CD4-positive, alpha-beta T cell (primary cell): ENCODE measurements at regions of chr20 and their contacts with region 1.

Region 1: GRCh38 chr20:50790651-50791277 is 4.1 kb upstream of the BCAS4 start:
- DNase-seq: peak; percentile 63 to 87 (median 78)
- ATAC-seq: peak; percentile 68
- H3K4me3 ChIP-seq: peak overlapping the region; percentile 25
- H3K4me3 Mint-ChIP-seq: no peak overlapping the region
- H3K27ac ChIP-seq: peak overlapping the region in 1 of 2 donors; percentile 71
- H3K27ac Mint-ChIP-seq: peak overlapping the region; percentile 44
- H3K4me1 ChIP-seq: peaks cover 27% of the 10 kb centered on the region
- H3K4me1 Mint-ChIP-seq: peaks cover 10% of the 10 kb centered on the region
- H3K27me3 ChIP-seq: no peaks in the 10 kb centered on the region
- H3K27me3 Mint-ChIP-seq: no peaks in the 10 kb centered on the region
- CTCF ChIP-seq: peak; percentile 81

Region 2: DNA sequence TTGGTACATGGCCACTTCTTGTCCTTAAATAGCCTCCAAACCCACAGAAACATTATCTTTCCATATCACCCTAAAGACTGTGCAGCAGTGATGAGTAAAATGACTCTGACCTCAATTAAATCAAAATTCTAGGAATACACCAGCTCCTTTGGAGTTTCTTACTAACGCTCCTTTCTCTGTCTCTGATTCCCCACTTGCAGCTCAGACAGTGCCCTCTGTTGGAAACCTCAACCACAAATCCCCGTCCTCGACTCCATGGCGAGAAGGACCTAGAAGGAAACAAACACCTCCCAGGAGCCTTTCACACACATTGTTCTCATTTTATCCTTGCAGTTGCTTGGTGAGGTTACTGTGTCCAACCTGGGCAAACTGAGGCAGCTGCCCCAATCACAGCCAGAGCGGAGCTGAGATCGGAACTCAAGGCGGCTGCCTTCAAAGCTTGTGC is 77.1 kb before region 1 on chr20:
- CTCF ChIA-PET with region 1: no interaction called
- POLR2A ChIA-PET with region 1: no interaction called
- intact Hi-C with region 1: no loop called
- DNase-seq: no peak
- ATAC-seq: no peak
- H3K4me3 ChIP-seq: no peak overlapping the region
- H3K4me3 Mint-ChIP-seq: no peak overlapping the region
- H3K27ac ChIP-seq: no peak overlapping the region
- H3K27ac Mint-ChIP-seq: no peak overlapping the region
- H3K4me1 ChIP-seq: no peaks in the 10 kb centered on the region
- H3K4me1 Mint-ChIP-seq: no peaks in the 10 kb centered on the region
- H3K27me3 ChIP-seq: peaks cover 0 to 7% of the 10 kb centered on the region in 2 experiments
- H3K27me3 Mint-ChIP-seq: peaks cover 29% of the 10 kb centered on the region
- CTCF ChIP-seq: no peak

Region 3: DNA sequence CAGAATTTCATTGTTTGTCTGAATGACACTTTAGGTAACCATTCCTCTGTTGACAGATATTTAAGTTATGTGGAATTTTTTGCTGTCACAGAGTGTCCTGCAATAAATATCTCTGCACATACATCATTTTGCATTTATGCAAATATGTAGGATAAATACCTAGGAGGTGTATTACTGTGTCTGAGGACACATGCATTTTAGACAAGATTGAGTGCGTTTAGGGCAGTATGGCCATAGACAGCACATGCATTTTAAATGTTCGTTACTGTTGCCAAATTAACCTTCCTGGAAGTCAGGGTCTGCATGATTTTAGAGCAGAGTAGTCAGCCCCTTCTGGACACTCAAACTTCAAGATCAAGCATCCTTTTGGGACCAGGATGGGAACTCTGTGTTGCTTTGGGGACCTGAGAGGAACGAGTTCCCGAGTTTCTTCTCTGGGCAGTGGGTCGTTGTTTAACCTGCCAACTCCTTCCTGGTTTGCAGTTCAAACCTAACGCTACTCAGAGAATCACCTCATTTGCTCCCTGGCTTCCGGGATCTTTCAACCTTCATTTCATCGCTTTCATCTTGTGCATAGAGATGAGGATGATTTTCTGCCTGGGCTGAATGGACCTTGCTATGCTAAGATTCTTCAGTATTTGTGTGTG is 13.8 kb after region 1 on chr20:
- CTCF ChIA-PET with region 1: interaction called, 10 read pairs
- POLR2A ChIA-PET with region 1: interaction called, 8 read pairs
- intact Hi-C with region 1: no loop called
- DNase-seq: peak in 10 of 14 experiments; percentile 9 to 70 (median 34)
- ATAC-seq: peak; percentile 96
- H3K4me3 ChIP-seq: no peak overlapping the region
- H3K4me3 Mint-ChIP-seq: peak overlapping the region; percentile 60
- H3K27ac ChIP-seq: peak overlapping the region; percentile 23 to 43
- H3K27ac Mint-ChIP-seq: peak overlapping the region; percentile 86
- H3K4me1 ChIP-seq: peaks cover 18% of the 10 kb centered on the region
- H3K4me1 Mint-ChIP-seq: peaks cover 37% of the 10 kb centered on the region
- H3K27me3 ChIP-seq: no peaks in the 10 kb centered on the region
- H3K27me3 Mint-ChIP-seq: no peaks in the 10 kb centered on the region
- CTCF ChIP-seq: no peak

Region 4: DNA sequence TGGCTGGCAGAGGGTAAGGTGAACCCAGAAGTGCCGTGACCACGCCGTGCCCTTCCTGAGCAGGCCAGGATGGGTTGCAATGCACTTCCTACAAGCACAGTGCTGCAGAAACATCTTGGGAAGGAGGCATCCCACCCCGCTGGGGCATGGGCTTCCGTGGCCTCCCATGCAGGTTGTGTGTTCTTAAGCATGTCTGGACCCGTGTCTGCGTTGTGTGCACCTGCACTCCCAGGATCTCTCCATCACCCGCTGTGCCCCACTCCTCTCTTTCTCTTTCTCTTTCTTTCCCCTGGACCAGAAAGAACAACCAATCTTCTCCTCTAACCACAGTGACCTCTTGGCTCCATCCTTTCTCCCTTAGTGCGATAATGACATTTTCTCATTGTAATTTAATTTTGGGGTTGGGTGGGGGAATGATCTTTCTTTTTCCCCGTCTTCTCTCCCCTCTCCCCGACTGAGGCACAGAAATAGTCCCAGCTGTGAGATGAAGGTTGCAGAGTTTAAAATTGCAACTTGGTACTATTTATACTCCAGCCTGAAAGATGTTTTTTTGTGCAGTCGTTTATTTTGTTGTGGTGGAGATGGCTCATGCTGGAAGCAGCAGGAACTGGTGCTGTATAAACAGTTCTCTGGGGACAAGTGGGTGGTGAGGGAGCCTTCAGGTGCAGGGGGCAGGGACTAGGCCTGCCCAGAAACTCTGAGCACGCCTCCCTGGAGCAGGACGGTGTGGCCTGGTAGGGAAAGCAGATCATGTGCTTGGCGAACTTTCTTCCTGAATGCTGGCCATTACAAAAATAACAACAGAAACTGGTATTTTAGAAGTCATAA is 24.6 kb after region 1 on chr20:
- CTCF ChIA-PET with region 1: interaction called, 24 read pairs
- POLR2A ChIA-PET with region 1: interaction called, 53 read pairs
- intact Hi-C with region 1: loop called (anchors 1 kb)
- DNase-seq: peak in 2 of 14 experiments; percentile 9 to 30
- ATAC-seq: peak; percentile 15
- H3K4me3 ChIP-seq: peak overlapping the region; percentile 7
- H3K4me3 Mint-ChIP-seq: peak overlapping the region; percentile 66
- H3K27ac ChIP-seq: no peak overlapping the region
- H3K27ac Mint-ChIP-seq: peak overlapping the region; percentile 87
- H3K4me1 ChIP-seq: peaks cover 34% of the 10 kb centered on the region
- H3K4me1 Mint-ChIP-seq: peaks cover 48% of the 10 kb centered on the region
- H3K27me3 ChIP-seq: no peaks in the 10 kb centered on the region
- H3K27me3 Mint-ChIP-seq: no peaks in the 10 kb centered on the region
- CTCF ChIP-seq: no peak

Region 5: GRCh38 chr20:50837532-50838506 is 47.1 kb after region 1 on chr20:
- CTCF ChIA-PET with region 1: no interaction called
- POLR2A ChIA-PET with region 1: no interaction called
- intact Hi-C with region 1: no loop called
- DNase-seq: no peak
- ATAC-seq: no peak
- H3K4me3 ChIP-seq: no peak overlapping the region
- H3K4me3 Mint-ChIP-seq: no peak overlapping the region
- H3K27ac ChIP-seq: no peak overlapping the region
- H3K27ac Mint-ChIP-seq: no peak overlapping the region
- H3K4me1 ChIP-seq: no peaks in the 10 kb centered on the region
- H3K4me1 Mint-ChIP-seq: no peaks in the 10 kb centered on the region
- H3K27me3 ChIP-seq: no peaks in the 10 kb centered on the region
- H3K27me3 Mint-ChIP-seq: no peaks in the 10 kb centered on the region
- CTCF ChIP-seq: no peak

Region 6: DNA sequence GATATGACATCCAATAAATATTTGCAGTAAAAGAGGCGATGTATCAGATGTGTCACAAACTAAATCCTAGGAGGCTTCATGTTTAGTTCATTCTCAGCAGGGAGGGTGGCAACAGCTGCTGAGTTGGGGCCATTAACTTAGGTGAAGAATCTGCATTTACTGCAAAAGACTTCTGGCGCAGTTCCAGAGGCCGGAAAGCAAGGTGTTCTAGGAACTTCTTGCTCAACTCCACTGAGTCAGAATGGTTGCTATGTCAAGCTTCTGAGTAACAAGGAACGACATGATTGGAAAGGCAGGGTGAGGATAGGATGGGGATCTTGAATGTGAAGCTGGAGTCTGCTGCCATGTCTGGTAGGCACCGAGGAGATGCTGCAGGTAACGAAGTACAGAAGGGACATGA is 128.8 kb after region 1 on chr20:
- CTCF ChIA-PET with region 1: interaction called, 13 read pairs
- POLR2A ChIA-PET with region 1: interaction called, 5 read pairs
- intact Hi-C with region 1: no loop called
- DNase-seq: no peak
- ATAC-seq: no peak
- H3K4me3 ChIP-seq: no peak overlapping the region
- H3K4me3 Mint-ChIP-seq: peak overlapping the region; percentile 39
- H3K27ac ChIP-seq: no peak overlapping the region
- H3K27ac Mint-ChIP-seq: peak overlapping the region; percentile 78
- H3K4me1 ChIP-seq: peaks cover 45% of the 10 kb centered on the region
- H3K4me1 Mint-ChIP-seq: peaks cover 91% of the 10 kb centered on the region
- H3K27me3 ChIP-seq: no peaks in the 10 kb centered on the region
- H3K27me3 Mint-ChIP-seq: no peaks in the 10 kb centered on the region
- CTCF ChIP-seq: no peak

Region 7: GRCh38 chr20:50958615-50959542 is 168.1 kb after region 1 on chr20 and contains the start of gene MOCS3:
- CTCF ChIA-PET with region 1: interaction called, 33 read pairs
- POLR2A ChIA-PET with region 1: interaction called, 47 read pairs
- intact Hi-C with region 1: loop called (anchors 2 kb)
- DNase-seq: peak; percentile 70 to 96 (median 76)
- ATAC-seq: peak; percentile 81
- H3K4me3 ChIP-seq: peak within 1 kb of the TSS; percentile 94
- H3K4me3 Mint-ChIP-seq: peak within 1 kb of the TSS; percentile 94
- H3K27ac ChIP-seq: peak within 1 kb of the TSS; percentile 82 to 99
- H3K27ac Mint-ChIP-seq: peak within 1 kb of the TSS; percentile 96
- H3K4me1 ChIP-seq: peaks cover 34% of the 10 kb centered on the region
- H3K4me1 Mint-ChIP-seq: peaks cover 62% of the 10 kb centered on the region
- H3K27me3 ChIP-seq: no peaks in the 10 kb centered on the region
- H3K27me3 Mint-ChIP-seq: no peaks in the 10 kb centered on the region
- CTCF ChIP-seq: no peak
- total RNA-seq, gene MOCS3: 2.7 to 3.0 TPM

Region 8: DNA sequence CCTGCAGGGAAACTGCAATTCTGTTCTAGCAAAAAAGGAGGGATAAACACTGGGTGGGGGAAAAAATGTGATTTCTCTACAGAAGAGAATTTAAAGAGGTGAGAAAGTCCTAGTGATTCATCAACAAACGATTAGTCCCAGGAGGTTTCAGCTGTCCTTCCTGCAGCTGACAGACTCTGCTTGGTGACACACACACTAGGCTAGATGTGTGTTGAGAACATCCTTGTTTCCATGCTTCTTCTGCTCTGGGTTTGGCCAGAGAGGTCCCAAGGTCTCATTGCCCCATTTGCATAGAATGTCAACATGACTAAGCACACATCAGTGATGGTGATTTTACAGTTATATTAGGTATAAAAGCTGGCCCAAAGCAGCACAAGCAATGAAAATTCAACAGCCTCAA is 493.4 kb after region 1 on chr20:
- CTCF ChIA-PET with region 1: no interaction called
- POLR2A ChIA-PET with region 1: no interaction called
- intact Hi-C with region 1: no loop called
- DNase-seq: no peak
- ATAC-seq: no peak
- H3K4me3 ChIP-seq: no peak overlapping the region
- H3K4me3 Mint-ChIP-seq: no peak overlapping the region
- H3K27ac ChIP-seq: no peak overlapping the region
- H3K27ac Mint-ChIP-seq: no peak overlapping the region
- H3K4me1 ChIP-seq: no peaks in the 10 kb centered on the region
- H3K4me1 Mint-ChIP-seq: no peaks in the 10 kb centered on the region
- H3K27me3 ChIP-seq: peaks cover 0 to 3% of the 10 kb centered on the region in 2 experiments
- H3K27me3 Mint-ChIP-seq: peaks cover 19% of the 10 kb centered on the region
- CTCF ChIP-seq: no peak

Region 9: DNA sequence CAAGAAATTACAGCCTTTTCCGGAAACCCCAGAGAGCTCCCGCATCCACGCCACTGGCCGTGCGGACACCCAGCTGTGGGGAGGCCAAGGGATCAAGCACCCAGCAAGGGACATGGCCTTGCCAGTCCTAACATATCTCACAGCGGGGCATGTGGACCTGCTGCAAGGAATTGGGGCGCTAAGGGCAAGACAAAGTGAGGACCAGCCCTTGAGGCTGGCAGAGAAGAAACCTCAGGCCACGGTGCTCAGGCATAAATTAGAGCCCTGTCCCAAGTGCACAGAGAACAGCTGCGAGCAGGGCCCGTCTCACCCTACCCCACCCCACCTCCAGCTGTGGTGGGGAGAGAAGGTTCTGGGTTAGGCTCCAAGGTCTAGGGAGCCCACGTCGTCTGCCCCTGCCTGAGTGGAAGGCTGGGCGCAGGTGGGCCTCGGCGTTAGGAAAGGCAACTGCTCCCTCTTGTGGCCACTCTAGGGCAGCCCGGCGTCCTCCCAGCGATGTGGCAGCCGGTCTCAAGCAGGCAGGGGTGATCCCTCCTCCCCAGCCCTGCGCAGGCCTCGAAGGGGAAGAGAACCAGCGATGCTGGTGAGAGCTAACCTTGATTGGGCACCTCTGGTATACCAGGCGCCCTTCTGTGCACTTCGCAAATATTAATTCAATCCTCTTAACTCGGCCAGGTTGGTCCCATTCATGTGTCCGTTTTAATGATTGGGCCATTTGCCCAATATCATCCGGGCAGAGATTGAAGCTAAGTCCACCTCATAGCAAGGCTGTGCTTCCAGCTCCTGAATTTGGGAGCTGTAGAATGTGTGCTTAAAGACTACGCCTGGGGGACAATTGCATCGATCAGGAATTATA is 516.0 kb after region 1 on chr20:
- CTCF ChIA-PET with region 1: no interaction called
- POLR2A ChIA-PET with region 1: interaction called, 3 read pairs
- intact Hi-C with region 1: loop called (anchors 1 kb)
- DNase-seq: peak; percentile 37 to 81 (median 62)
- ATAC-seq: peak; percentile 90
- H3K4me3 ChIP-seq: no peak overlapping the region
- H3K4me3 Mint-ChIP-seq: no peak overlapping the region
- H3K27ac ChIP-seq: no peak overlapping the region
- H3K27ac Mint-ChIP-seq: no peak overlapping the region
- H3K4me1 ChIP-seq: peaks cover 6% of the 10 kb centered on the region
- H3K4me1 Mint-ChIP-seq: no peaks in the 10 kb centered on the region
- H3K27me3 ChIP-seq: peaks cover 0 to 5% of the 10 kb centered on the region in 2 experiments
- H3K27me3 Mint-ChIP-seq: peaks cover 34% of the 10 kb centered on the region
- CTCF ChIP-seq: peak; percentile 81